Left ventricle myocardium inferior (tissue), 1 donor: ENCODE measurements at regions of chr17 and their contacts with region 1.

Region 1: GRCh38 chr17:1628856-1629646 is 417 bp upstream of the SLC43A2 start:
- DNase-seq: peak; percentile 94
- H3K4me3 ChIP-seq: peak overlapping the region; percentile 91
- H3K27ac ChIP-seq: peak overlapping the region; percentile 93
- H3K4me1 ChIP-seq: peaks cover 41% of the 10 kb centered on the region
- H3K27me3 ChIP-seq: no peaks in the 10 kb centered on the region
- CTCF ChIP-seq: peak; percentile 61

Region 2: DNA sequence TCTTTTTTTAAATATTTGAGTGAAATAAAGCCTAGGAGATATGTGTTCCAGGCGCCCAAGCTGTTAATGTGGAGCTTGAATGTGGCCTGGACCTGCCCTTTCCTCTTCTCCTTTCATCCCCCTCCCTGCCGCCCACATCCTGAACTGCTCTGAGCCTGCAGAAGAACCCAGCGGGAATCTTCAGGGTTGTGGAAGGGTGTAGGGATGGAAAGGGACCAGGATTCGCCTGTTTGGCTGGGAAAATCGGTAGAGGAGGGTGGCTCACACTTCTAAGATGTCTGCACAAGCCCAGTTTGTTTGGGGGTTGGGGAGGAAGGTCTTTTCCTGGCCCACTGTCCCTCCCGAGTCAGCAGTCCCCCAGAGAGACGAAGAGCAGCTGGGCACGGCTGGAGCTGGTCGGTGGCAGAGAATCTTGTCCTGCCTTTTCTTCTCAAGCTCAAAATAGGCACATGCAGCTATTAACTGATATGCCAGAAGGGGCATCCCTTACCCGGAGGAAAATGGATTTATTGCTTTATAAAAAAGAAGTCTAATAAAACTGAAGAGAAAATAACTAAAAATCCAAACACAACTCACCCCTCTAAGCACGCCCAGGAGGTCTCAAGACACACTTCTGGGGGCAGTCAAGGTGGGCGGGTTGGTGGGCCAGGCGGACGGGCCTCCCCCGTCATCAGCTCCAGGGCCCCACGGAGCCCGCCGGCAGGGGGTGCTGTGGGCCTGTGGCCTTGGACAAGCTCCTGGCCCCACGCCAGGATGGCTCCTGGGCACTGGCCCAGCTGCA is 54.9 kb before region 1 on chr17:
- intact Hi-C with region 1: loop called (anchors 10 kb)
- DNase-seq: peak; percentile 87
- H3K4me3 ChIP-seq: no peak overlapping the region
- H3K27ac ChIP-seq: peak overlapping the region; percentile 73
- H3K4me1 ChIP-seq: peaks cover 43% of the 10 kb centered on the region
- H3K27me3 ChIP-seq: no peaks in the 10 kb centered on the region
- CTCF ChIP-seq: peak; percentile 98